ENCODE measurements at regions of chr3 and their contacts with region 1.

Region 1: DNA sequence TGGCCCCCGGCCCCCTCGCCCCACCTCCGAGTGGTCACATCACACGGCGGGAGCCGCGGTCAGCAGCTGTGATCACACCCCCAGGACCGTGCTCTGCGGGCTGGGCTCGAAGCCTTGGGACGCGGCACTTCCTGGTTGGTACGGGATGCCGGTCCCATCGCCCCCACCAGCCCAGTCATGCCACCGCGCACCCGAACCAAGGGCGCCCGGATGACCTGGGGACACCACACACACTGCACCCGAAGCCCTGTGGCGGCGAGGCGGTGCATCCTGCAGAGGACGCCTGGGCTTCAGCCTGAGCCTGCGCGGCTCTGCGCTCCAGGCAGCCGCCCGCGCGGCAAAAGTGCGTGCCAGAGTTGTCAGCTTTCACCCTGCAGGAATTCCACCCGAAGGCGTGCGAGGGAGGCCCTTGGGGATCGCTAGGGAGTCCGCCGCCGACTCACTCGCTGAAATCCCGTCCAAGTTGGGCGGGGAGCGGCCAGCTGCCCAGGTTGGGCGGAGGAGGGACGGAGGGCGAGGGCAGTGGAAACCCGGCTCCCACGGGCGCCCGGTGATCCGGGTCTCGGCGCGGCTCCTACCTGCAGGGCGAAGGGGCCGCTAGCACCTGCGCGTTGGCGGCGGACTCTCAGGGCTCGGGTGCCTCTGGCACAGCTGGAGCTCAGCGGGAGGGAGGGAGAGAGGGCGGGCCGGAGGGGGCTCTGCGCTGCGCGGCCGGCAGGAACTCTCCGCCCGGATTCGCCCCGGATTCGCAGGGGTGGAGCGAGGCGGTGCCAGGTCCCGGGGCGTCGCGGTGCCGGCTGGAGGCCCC is at the start of gene PLD1:
- DNase-seq: peak; percentile 86 to 95
- H3K4me3 ChIP-seq: peak within 1 kb of the TSS; percentile 61
- H3K27ac ChIP-seq: peak within 1 kb of the TSS; percentile 98
- H3K4me1 ChIP-seq: peaks cover 75% of the 10 kb centered on the region
- H3K27me3 ChIP-seq: no peaks in the 10 kb centered on the region
- CTCF ChIP-seq: no peak
- total RNA-seq, gene PLD1: 32.5 and 33.3 TPM in 2 replicates

Region 2: DNA sequence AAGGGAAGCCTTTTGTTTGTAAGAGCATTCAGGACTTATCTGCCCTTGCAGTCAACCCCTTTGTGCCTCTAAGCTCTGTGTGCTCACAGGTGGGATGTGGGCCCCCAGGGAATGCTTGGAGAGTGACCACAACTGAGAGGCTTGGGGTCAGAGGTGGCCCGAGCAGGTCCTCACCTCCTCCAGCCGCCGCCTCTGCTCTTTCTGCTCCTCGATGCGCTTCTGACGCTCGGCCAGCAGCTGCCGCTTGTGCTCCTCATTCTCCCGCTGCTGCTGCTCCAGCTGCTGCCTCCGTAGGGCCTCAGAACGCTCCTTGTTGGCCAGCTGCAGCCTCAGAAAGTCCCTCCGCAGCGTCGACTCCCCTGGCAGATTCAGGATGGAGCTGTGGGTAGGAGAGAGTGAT is 652.7 kb before region 1 on chr3:
- CTCF ChIA-PET with region 1: interaction called, 3 read pairs
- POLR2A ChIA-PET with region 1: interaction called, 5 read pairs
- intact Hi-C with region 1: loop called (anchors 1 kb)
- DNase-seq: peak in 1 of 2 experiments; percentile 77
- H3K4me3 ChIP-seq: peak overlapping the region; percentile 17; the same call in 1 of the 2 replicates
- H3K27ac ChIP-seq: peak overlapping the region; percentile 93
- H3K4me1 ChIP-seq: peaks cover 53% of the 10 kb centered on the region
- H3K27me3 ChIP-seq: no peaks in the 10 kb centered on the region
- CTCF ChIP-seq: peak; percentile 43; the same call in 1 of the 2 replicates

Region 3: GRCh38 chr3:171781711-171782127 is 28.3 kb before region 1 on chr3:
- CTCF ChIA-PET with region 1: no interaction called
- POLR2A ChIA-PET with region 1: no interaction called
- intact Hi-C with region 1: no loop called
- DNase-seq: peak in 1 of 2 experiments; percentile 68
- H3K4me3 ChIP-seq: no peak overlapping the region
- H3K27ac ChIP-seq: peak overlapping the region; percentile 15
- H3K4me1 ChIP-seq: peaks cover 16% of the 10 kb centered on the region
- H3K27me3 ChIP-seq: no peaks in the 10 kb centered on the region
- CTCF ChIP-seq: no peak

Region 4: GRCh38 chr3:171846597-171846996 is 36.6 kb after region 1 on chr3:
- CTCF ChIA-PET with region 1: no interaction called
- POLR2A ChIA-PET with region 1: no interaction called
- intact Hi-C with region 1: loop called (anchors 1 kb)
- DNase-seq: peak in 1 of 2 experiments; percentile 35
- H3K4me3 ChIP-seq: no peak overlapping the region
- H3K27ac ChIP-seq: no peak overlapping the region
- H3K4me1 ChIP-seq: peaks cover 19% of the 10 kb centered on the region
- H3K27me3 ChIP-seq: no peaks in the 10 kb centered on the region
- CTCF ChIP-seq: no peak

Region 5: DNA sequence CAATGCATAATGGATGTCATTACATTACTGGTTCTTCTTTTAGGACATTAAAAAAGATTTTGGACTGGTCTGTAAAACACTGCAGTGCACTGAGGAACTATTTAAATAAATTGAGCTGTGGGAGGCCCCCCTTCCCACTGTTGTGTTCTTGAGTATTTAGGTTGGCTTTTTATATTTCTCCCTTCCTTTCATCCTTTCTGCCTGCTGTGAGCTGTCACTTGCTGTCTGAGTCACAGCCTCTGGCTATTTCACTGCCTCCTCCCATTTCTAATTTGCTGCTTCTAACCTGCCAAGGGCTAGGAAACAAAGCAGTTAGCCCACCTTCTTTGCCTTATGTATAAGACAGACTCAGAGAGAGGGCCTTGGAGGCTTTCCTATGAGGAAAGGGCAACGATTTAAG is 140.3 kb after region 1 on chr3:
- CTCF ChIA-PET with region 1: no interaction called
- POLR2A ChIA-PET with region 1: interaction called, 11 read pairs
- intact Hi-C with region 1: no loop called
- DNase-seq: peak; percentile 21 to 65
- H3K4me3 ChIP-seq: no peak overlapping the region
- H3K27ac ChIP-seq: peak overlapping the region; percentile 19
- H3K4me1 ChIP-seq: peaks cover 56% of the 10 kb centered on the region
- H3K27me3 ChIP-seq: no peaks in the 10 kb centered on the region
- CTCF ChIP-seq: no peak

Region 6: GRCh38 chr3:172305552-172305951 is 495.5 kb after region 1 on chr3:
- CTCF ChIA-PET with region 1: no interaction called
- POLR2A ChIA-PET with region 1: no interaction called
- intact Hi-C with region 1: loop called (anchors 5 kb)
- DNase-seq: peak in 1 of 2 experiments; percentile 87
- H3K4me3 ChIP-seq: 0 out of 2 replicates have a peak overlapping the region, but pooled peaks have one; percentile 2
- H3K27ac ChIP-seq: peak overlapping the region; percentile 78
- H3K4me1 ChIP-seq: peaks cover 46% of the 10 kb centered on the region
- H3K27me3 ChIP-seq: no peaks in the 10 kb centered on the region
- CTCF ChIP-seq: no peak